ENCODE measurements at regions of chr15 and their contacts with region 1.

Region 1: GRCh38 chr15:40941528-40942336 is 11.5 kb upstream of the CHAC1 start:
- DNase-seq: peak; percentile 67 to 79 (median 74)
- H3K4me3 ChIP-seq: peak overlapping the region; percentile 30 to 87 (median 65)
- H3K27ac ChIP-seq: peak overlapping the region in 1 of 2 experiments; percentile 19
- H3K4me1 ChIP-seq: peaks cover 13 to 44% (median 38%) of the 10 kb centered on the region in 4 experiments
- H3K27me3 ChIP-seq: no peaks in the 10 kb centered on the region

Region 2: DNA sequence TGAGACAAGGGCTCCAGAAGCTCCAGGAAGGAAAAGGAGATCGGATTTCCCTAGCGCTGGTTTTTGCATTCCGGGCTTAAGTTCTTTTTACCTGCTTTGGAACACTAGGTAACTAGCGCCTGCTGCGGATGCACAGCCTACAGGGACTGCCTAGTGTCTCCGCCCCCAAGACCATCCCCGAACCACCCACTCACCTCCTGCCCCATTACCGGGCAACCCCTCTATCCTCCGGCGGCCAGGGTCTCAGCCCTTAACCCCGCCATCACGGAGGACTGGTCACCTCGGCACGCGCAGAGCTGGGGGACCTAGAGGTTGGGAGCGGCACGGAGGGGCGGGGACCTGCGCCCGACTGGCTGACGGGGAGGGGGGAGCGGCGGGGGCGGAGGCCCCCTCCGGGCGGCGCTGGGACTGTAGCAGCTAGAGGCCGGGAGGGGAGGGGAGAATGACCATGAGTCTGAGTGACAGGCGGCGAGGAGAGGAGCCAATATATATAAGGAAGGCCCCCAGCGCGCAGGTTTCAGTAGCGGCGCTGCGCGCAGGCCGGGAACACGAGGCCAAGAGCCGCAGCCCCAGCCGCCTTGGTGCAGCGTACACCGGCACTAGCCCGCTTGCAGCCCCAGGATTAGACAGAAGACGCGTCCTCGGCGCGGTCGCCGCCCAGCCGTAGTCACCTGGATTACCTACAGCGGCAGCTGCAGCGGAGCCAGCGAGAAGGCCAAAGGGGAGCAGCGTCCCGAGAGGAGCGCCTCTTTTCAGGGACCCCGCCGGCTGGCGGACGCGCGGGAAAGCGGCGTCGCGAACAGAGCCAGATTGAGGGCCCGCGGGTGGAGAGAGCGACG is 12.7 kb before region 1 on chr15 and contains the start of gene DLL4:
- CTCF ChIA-PET with region 1: interaction called, 46 read pairs
- POLR2A ChIA-PET with region 1: no interaction called
- DNase-seq: peak in 2 of 3 donors; percentile 56 to 67
- H3K4me3 ChIP-seq: peak within 1 kb of the TSS in 6 of 7 experiments; percentile 38 to 70 (median 56)
- H3K27ac ChIP-seq: no peak within 1 kb of the TSS
- H3K4me1 ChIP-seq: peaks cover 8 to 78% (median 75%) of the 10 kb centered on the region in 4 experiments
- H3K27me3 ChIP-seq: peaks cover 3 to 83% (median 35%) of the 10 kb centered on the region in 5 experiments

Region 3: GRCh38 chr15:40952901-40953712 is 11.4 kb after region 1 on chr15 and contains the start of gene CHAC1:
- CTCF ChIA-PET with region 1: interaction called, 46 read pairs
- POLR2A ChIA-PET with region 1: interaction called, 7 read pairs
- DNase-seq: peak; percentile 86 to 94 (median 94)
- H3K4me3 ChIP-seq: peak within 1 kb of the TSS; percentile 38 to 83 (median 63)
- H3K27ac ChIP-seq: peak within 1 kb of the TSS in 1 of 2 experiments; percentile 74
- H3K4me1 ChIP-seq: peaks cover 0 to 26% (median 19%) of the 10 kb centered on the region in 4 experiments
- H3K27me3 ChIP-seq: peaks cover 0 to 8% (median 0%) of the 10 kb centered on the region in 5 experiments

Region 4: DNA sequence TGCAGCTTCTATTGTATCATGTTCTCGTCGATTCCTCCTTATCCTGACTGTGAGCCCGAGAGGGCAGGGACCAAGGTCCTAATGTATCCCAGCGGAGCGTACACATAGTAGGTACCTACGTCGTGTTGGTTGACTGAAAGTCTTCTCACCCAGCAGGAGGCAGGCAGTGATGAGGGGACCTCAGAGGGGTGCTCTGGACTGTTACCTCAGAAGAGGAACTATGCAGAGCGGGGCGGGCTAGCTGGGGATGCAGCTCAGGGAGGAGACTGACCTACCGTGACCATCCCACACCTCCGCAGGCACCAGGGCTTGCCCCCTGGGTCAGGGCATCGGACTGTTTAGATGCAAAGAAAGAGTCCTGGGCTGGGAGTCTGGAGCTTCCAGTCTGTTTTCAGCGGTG is 22.9 kb after region 1 on chr15:
- CTCF ChIA-PET with region 1: interaction called, 11 read pairs
- POLR2A ChIA-PET with region 1: no interaction called
- DNase-seq: no peak
- H3K4me3 ChIP-seq: no peak overlapping the region
- H3K27ac ChIP-seq: no peak overlapping the region
- H3K4me1 ChIP-seq: peaks cover 0 to 9% (median 6%) of the 10 kb centered on the region in 4 experiments
- H3K27me3 ChIP-seq: no peaks in the 10 kb centered on the region

Region 5: DNA sequence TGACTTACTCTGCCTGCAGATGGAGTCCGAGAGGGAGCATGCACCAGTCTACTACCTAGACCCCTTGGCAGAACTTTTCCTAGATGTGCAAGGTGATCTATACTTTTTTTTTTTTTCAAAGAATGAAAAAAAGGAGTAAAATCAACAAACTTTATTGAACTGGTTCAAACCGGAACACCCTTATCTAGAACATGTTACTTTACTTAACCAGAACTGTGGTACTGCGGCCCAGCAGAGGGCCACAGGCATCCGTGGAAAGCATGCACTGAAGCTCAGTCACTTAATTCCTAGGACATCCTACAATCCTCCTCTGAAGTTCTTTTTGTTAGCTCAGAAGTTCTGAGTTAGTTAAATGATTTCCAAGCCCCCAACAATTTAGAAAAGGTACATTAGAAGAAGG is 33.1 kb after region 1 on chr15:
- CTCF ChIA-PET with region 1: interaction called, 10 read pairs
- POLR2A ChIA-PET with region 1: no interaction called
- DNase-seq: no peak
- H3K4me3 ChIP-seq: no peak overlapping the region
- H3K27ac ChIP-seq: no peak overlapping the region
- H3K4me1 ChIP-seq: no peaks in the 10 kb centered on the region
- H3K27me3 ChIP-seq: no peaks in the 10 kb centered on the region

Region 6: GRCh38 chr15:41022487-41023090 is 80.9 kb after region 1 on chr15:
- CTCF ChIA-PET with region 1: interaction called, 42 read pairs
- POLR2A ChIA-PET with region 1: no interaction called
- DNase-seq: peak; percentile 59 to 81 (median 76)
- H3K4me3 ChIP-seq: no peak overlapping the region
- H3K27ac ChIP-seq: no peak overlapping the region
- H3K4me1 ChIP-seq: peaks cover 1 to 10% (median 3%) of the 10 kb centered on the region in 4 experiments
- H3K27me3 ChIP-seq: no peaks in the 10 kb centered on the region

Measured in common myeloid progenitor, CD34-positive (primary cell).